Dendritic cell treated with granulocyte-macrophage colony-stimulating factor and Interleukin-4, amounts not matched to agents 40 ng/mL and 50 ng/mL, for 4 days (primary cell): ENCODE measurements at regions of chr14 and their contacts with region 1.

Region 1: DNA sequence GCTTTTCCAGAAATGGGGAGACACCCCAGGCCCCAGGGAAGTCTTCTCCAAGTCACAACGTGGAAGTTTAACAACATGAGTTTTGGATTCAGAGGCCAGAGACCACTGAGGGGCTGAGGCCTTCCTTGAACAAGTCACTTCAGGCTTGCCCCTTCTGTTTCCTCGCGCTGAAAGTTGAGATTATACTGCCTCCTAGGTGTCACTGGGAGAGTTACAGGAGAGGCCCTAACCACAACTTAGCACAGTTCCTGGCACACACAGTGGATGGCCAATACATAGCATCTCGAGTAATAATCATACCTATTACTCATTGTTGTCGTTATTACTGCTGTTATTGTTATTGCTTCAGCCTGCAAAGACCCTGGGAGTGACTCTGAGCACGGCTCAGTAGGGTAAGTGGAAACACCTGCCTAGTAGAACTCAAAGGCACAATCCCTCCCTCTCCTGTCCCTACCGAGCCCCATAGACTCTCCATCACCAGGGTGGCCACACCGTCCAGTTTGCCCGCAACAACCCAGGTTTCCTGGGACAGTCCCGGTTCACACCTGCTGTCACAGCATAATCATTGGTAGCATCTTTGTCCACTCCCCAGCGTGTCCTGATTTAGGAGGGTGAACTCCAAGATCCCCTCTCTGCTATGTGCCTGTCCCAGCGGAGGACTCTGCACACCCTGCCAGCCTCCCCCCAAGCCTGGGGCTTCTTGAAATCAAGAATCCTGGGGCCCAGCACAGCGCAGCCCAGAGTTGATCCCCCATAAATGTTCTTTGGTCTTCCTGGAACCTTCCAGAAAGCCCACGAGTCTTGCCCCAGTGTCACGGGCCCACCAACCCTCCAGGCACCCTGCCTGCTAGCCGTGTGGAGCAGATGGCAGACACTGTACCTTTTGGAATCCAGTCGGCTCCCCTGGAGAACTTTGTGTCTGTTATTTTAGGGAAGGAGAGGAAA is 85.0 kb downstream of the SYNE3 start:
- H3K4me3 Mint-ChIP-seq: no peak overlapping the region
- H3K27ac Mint-ChIP-seq: no peak overlapping the region
- H3K4me1 Mint-ChIP-seq: no peaks in the 10 kb centered on the region
- H3K27me3 Mint-ChIP-seq: no peaks in the 10 kb centered on the region

Region 2: DNA sequence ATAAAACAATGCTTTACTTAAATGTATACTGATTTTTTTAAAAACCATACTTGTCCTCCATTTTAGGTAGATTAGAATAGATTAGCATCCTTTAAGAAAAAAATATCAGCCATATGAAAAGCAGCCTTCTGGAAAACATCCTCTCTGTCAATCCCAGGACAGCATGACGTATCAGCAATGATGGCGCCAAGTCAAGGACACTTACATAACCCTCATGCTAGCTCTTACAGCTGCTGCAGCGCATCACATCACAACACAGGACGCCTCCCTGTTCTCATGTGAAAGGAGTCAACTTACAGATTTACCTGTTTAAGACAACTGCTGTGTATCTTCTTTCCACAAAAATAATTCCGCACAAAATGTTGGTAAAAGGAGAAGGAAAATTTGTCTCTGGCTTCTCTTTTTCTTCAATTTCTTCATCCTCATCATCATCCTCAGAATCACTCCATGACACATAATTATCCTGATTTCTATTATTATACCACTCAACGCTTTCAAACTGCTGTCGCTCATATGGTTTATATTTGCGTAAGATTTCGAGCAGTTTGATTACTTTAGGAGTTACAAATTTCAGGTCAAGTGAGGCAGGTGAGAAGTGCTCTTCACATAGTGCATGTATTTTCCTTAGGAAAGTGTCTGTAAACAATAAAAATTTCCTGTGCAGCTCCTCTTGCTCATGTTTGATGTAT is 307.4 kb before region 1 on chr14:
- intact Hi-C with region 1: loop called (anchors 10 kb)
- H3K4me3 Mint-ChIP-seq: no peak overlapping the region
- H3K27ac Mint-ChIP-seq: no peak overlapping the region
- H3K4me1 Mint-ChIP-seq: peaks cover 10% of the 10 kb centered on the region
- H3K27me3 Mint-ChIP-seq: no peaks in the 10 kb centered on the region

Region 3: DNA sequence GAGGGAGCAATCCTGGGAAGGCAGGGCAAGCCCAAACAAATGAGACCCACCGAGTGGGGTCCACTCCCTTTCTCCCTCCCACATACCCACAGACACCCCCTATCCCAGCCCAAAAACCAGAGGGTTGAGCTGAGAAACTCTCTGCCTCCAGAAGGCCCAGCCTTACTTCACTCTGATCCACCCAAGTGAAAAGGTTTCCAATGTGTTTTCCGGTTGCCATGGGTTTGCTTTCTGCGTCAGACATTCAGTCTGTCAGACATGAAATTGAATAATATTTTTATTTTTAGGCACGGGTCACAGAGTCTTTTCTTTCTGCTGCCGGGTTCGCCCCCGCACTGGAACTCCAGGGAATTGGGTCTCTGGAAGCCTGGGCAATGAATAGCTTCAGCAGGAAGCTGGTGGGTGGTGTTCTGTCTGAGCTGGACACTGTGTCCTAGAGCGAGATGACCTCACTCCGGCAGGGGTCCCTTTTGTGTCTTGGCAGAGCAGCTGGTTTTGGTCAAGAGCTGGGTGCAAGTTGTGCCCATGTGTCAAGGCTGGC is 41.9 kb before region 1 on chr14:
- intact Hi-C with region 1: no loop called
- H3K4me3 Mint-ChIP-seq: no peak overlapping the region
- H3K27ac Mint-ChIP-seq: no peak overlapping the region
- H3K4me1 Mint-ChIP-seq: peaks cover 5% of the 10 kb centered on the region
- H3K27me3 Mint-ChIP-seq: peaks cover 5% of the 10 kb centered on the region